ENCODE measurements at regions of chr1 and their contacts with region 1.

Region 1: GRCh38 chr1:211514030-211514754 is 22.2 kb upstream of the RD3 start:
- DNase-seq: peak; percentile 74 to 90
- H3K4me3 ChIP-seq: no peak overlapping the region
- H3K27ac ChIP-seq: no peak overlapping the region
- H3K4me1 ChIP-seq: peaks cover 0 to 8% (median 3%) of the 10 kb centered on the region in 4 experiments; a peak in 5 of 7 replicates
- H3K27me3 ChIP-seq: peaks cover 0 to 15% (median 10%) of the 10 kb centered on the region in 4 experiments; a peak in 5 of 7 replicates
- CTCF ChIP-seq: peak; percentile 91
- EP300 ChIP-seq: no peak
- POLR2A ChIP-seq: no peak
- RAD21 ChIP-seq: peak; percentile 93 to 94

Region 2: GRCh38 chr1:211415700-211416099 is 98.5 kb before region 1 on chr1:
- CTCF ChIA-PET with region 1: interaction called, 10 read pairs
- POLR2A ChIA-PET with region 1: no interaction called
- DNase-seq: no peak
- H3K4me3 ChIP-seq: peak overlapping the region in 3 of 4 experiments; percentile 11 to 55 (median 32); a peak in 4 of 8 replicates
- H3K27ac ChIP-seq: no peak overlapping the region
- H3K4me1 ChIP-seq: peaks cover 0 to 3% (median 1%) of the 10 kb centered on the region in 4 experiments; a peak in 3 of 7 replicates
- H3K27me3 ChIP-seq: no peaks in the 10 kb centered on the region
- CTCF ChIP-seq: no peak
- EP300 ChIP-seq: no peak
- POLR2A ChIP-seq: no peak
- RAD21 ChIP-seq: no peak

Region 3: DNA sequence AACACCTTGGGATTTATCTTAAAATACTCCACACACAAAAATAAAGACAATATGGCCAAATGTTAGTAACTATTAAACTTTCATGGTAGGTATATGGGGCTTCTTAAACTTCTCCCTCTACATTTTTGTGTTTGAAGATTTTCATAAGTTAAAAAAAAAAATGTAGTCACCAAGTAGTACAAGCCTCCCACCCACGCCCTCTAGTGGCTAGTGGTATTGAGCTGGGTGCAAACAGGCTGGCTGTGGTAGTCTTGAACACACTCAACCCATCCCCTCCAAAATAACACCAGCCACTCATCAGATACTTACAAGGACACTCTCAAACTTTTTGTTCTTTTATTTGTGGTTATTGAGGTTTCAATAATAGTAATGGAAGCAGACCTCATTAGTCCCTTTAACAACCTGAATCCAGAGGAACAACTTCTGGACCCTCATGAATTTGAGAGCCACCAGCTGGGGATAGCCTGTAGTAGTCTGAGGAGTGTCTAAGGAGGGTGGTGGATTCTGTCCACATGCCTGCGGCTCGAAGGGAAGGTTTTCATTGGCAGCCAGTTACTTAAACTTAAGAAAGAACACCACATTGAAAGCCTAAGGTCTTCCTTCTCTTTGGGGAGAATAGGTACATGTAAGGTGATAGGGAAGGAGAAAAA is 37.9 kb before region 1 on chr1:
- CTCF ChIA-PET with region 1: interaction called, 52 read pairs
- POLR2A ChIA-PET with region 1: interaction called, 3 read pairs
- DNase-seq: peak in 1 of 2 experiments; percentile 70
- H3K4me3 ChIP-seq: no peak overlapping the region
- H3K27ac ChIP-seq: no peak overlapping the region
- H3K4me1 ChIP-seq: no peaks in the 10 kb centered on the region; a peak in 1 of 7 replicates
- H3K27me3 ChIP-seq: no peaks in the 10 kb centered on the region
- CTCF ChIP-seq: peak; percentile 75 to 82 (median 75)
- EP300 ChIP-seq: no peak
- POLR2A ChIP-seq: no peak
- RAD21 ChIP-seq: peak; percentile 60 to 66

Region 4: DNA sequence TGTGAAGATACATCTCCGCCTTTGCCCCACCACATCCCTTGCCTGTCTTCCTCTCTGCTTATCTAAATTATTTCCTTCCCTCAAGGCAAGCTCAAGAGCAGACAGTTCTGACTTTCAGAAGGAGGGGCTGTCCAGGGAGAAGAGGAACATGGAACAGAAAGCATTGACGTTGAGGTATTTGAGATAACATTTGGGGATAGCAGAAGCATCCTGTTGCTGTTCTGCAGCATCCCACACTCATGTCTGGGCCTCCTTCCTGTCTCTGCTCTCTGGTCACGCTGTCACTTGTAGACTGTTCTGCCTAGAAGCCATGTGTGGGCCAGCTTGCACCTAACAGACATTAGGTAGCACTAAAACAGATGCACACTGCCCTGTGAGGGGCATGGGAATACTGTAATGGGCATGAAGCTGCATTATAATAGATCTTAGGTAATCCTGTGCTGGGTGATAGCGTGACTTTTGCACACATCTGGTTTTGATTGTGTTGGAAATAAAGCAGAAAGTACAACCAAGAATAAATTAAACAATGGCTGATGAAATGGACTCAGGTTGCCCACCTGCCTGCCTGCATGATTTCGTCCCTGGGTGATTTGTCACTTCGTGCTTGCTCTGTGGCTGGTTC is 21.6 kb before region 1 on chr1:
- CTCF ChIA-PET with region 1: interaction called, 79 read pairs
- POLR2A ChIA-PET with region 1: no interaction called
- DNase-seq: no peak
- H3K4me3 ChIP-seq: no peak overlapping the region
- H3K27ac ChIP-seq: no peak overlapping the region
- H3K4me1 ChIP-seq: no peaks in the 10 kb centered on the region; a peak in 1 of 7 replicates
- H3K27me3 ChIP-seq: no peaks in the 10 kb centered on the region; a peak in 1 of 7 replicates
- CTCF ChIP-seq: no peak
- EP300 ChIP-seq: no peak
- POLR2A ChIP-seq: no peak
- RAD21 ChIP-seq: no peak

Region 5: GRCh38 chr1:211527006-211527405 is 12.8 kb after region 1 on chr1:
- CTCF ChIA-PET with region 1: interaction called, 30 read pairs
- POLR2A ChIA-PET with region 1: interaction called, 6 read pairs
- DNase-seq: no peak
- H3K4me3 ChIP-seq: no peak overlapping the region
- H3K27ac ChIP-seq: no peak overlapping the region
- H3K4me1 ChIP-seq: no peaks in the 10 kb centered on the region; a peak in 1 of 7 replicates
- H3K27me3 ChIP-seq: no peaks in the 10 kb centered on the region; a peak in 1 of 7 replicates
- CTCF ChIP-seq: no peak
- EP300 ChIP-seq: no peak
- POLR2A ChIP-seq: no peak
- RAD21 ChIP-seq: no peak

Region 6: DNA sequence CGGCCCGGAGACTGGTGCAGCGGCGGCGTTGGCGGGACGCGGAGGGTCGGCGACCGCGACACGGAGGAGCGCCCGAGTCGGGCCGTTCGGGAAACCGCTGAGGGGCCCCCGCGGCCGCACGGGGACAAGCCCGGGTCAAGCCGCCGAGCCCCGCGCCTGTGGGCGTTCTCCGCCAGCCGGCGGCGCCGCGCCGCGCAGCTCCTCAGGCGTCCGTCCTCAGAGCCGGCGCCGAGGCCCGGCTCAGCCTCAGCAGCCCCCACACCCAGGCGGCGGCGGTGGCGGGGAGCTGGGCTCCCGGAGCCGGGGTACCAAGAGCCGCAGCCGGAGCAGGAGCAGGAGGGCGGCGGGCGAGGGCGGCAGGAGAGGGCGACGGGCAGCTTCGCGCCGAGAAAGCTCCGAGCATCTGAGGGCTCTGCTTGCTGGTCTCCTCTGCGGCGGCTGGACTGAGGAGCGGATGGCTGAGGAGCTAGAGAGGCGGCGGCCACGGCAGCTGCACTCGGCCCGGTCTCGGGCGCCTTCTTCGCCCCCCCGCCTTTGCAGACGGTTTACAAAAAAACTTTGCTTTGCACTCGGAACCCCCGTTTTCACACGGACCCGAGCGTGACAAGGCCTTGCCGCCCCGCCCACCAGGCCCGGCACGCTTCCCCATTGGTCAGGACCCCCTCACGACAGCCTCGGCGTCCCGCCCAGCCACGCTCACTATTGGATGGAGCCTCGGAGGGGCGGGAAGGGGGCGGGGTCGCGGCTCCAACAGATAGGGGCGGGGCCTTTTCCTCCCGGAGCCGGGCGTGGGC is 64.6 kb after region 1 on chr1 and contains the start of gene SLC30A1:
- CTCF ChIA-PET with region 1: interaction called, 17 read pairs
- POLR2A ChIA-PET with region 1: interaction called, 3 read pairs
- DNase-seq: peak; percentile 85 to 98
- H3K4me3 ChIP-seq: peak within 1 kb of the TSS; percentile 66 to 92 (median 84)
- H3K27ac ChIP-seq: no peak within 1 kb of the TSS
- H3K4me1 ChIP-seq: peaks cover 0 to 13% (median 9%) of the 10 kb centered on the region in 4 experiments; a peak in 6 of 7 replicates
- H3K27me3 ChIP-seq: no peaks in the 10 kb centered on the region
- CTCF ChIP-seq: no peak
- EP300 ChIP-seq: no peak
- POLR2A ChIP-seq: peak in 1 of 2 experiments; percentile 67; a peak in 1 of 3 replicates
- RAD21 ChIP-seq: no peak
- total RNA-seq, gene SLC30A1: 13.5 and 14.0 TPM in 2 replicates

Measured in H1 (cell line).